ENCODE measurements at regions of chr19 and their contacts with region 1.

Region 1: DNA sequence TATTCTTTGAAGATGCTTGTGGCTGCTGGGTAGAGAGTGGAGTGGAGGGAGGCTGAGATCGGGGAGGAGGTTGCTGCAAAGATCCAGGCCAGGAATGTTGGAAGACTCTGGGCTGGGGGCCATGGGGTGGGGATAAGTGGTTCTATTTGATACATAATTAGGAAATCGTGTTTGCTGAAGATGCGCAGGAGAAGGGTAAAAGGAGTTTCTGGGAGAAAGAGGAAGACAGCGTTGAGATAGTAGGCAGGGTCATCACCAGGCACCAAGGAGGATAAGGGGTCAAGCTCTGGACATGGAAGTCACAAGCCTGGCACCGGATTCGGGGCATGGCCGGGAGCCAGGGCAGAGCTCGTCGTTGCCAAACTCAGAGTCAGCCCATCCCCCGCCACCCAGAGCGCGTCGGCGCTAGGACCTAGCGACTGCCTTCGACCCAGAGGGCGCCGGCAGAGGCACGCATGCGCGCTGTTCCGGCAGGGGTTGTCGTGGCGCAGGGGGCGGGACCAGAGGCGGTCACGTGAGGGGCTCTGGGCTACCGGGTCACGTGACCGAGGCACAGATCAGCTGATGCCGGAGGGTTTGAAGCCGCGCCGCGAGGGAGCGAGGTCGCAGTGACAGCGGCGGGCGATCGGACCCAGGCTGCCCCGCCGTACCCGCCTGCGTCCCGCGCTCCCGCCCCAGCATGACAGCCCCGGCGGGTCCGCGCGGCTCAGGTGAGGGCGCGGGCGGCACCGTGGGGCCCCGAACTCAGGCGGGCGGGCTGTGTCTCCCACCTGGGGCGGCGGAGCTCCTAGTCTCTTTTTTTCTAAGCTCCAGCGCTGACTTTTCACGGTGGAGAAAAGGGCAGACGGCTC is at the start of gene MCOLN1:
- DNase-seq: peak; percentile 46
- H3K4me3 ChIP-seq: peak within 1 kb of the TSS; percentile 70
- CTCF ChIP-seq: no peak

Region 2: GRCh38 chr19:7535035-7535992 is 13.0 kb after region 1 on chr19 and contains the start of gene PNPLA6:
- CTCF ChIA-PET with region 1: interaction called, 11 read pairs
- POLR2A ChIA-PET with region 1: interaction called, 42 read pairs
- DNase-seq: no peak
- H3K4me3 ChIP-seq: peak within 1 kb of the TSS; percentile 99
- CTCF ChIP-seq: no peak